H1 (cell line): ENCODE measurements at regions of chr10 and their contacts with region 1.

Region 1: DNA sequence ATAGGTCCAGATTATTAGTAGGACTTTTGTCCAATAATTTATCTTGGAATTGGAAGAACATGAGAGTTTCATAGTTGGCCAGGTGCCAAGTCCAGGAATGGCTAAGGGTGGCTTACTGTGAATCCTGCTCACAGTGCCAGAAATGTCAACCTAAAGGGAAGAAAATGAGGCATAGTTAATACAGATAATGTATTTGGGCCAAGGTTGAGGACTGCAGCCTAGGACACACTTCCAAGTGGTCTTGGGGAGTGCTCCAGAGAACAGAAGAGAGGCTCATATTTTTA is 78.2 kb downstream of the MAPK8 start:
- DNase-seq: no peak
- H3K4me3 ChIP-seq: no peak overlapping the region
- H3K27ac ChIP-seq: no peak overlapping the region
- H3K4me1 ChIP-seq: peaks cover 0 to 4% (median 0%) of the 10 kb centered on the region in 4 experiments; a peak in 2 of 7 replicates
- H3K27me3 ChIP-seq: no peaks in the 10 kb centered on the region
- CTCF ChIP-seq: no peak
- EP300 ChIP-seq: no peak
- POLR2A ChIP-seq: no peak
- RAD21 ChIP-seq: no peak

Region 2: GRCh38 chr10:48353246-48353645 is 31.4 kb before region 1 on chr10:
- CTCF ChIA-PET with region 1: no interaction called
- POLR2A ChIA-PET with region 1: no interaction called
- DNase-seq: no peak
- H3K4me3 ChIP-seq: no peak overlapping the region
- H3K27ac ChIP-seq: no peak overlapping the region
- H3K4me1 ChIP-seq: no peaks in the 10 kb centered on the region
- H3K27me3 ChIP-seq: no peaks in the 10 kb centered on the region
- CTCF ChIP-seq: no peak
- EP300 ChIP-seq: no peak
- POLR2A ChIP-seq: no peak
- RAD21 ChIP-seq: no peak

Region 3: GRCh38 chr10:48363617-48364355 is 20.9 kb before region 1 on chr10:
- CTCF ChIA-PET with region 1: interaction called, 36 read pairs
- POLR2A ChIA-PET with region 1: no interaction called
- DNase-seq: no peak
- H3K4me3 ChIP-seq: no peak overlapping the region
- H3K27ac ChIP-seq: no peak overlapping the region
- H3K4me1 ChIP-seq: peaks cover 0 to 3% (median 0%) of the 10 kb centered on the region in 4 experiments; a peak in 1 of 7 replicates
- H3K27me3 ChIP-seq: no peaks in the 10 kb centered on the region
- CTCF ChIP-seq: peak in 2 of 3 experiments; percentile 66 to 68; a peak in 3 of 4 replicates
- EP300 ChIP-seq: no peak
- POLR2A ChIP-seq: no peak
- RAD21 ChIP-seq: peak; percentile 89 to 91

Region 4: DNA sequence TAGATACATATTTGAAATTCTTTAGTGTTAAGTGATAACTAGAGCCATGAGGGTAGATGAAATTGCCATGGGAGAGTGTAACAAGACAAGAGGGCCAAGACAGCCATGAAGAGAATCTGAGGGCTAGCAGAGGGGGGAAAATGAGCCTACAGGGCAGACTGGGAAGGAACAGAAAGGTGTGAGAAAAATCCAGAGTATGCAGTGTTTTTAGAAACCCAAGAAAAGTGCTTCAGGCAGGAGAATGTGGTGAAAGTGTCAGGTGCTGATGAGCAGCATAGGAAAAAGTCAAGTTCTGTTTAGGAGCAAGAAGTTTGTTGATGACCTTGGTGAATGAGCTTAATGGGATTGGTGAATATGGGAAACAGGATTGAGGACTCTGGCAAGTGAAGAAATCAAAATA is 15.1 kb before region 1 on chr10:
- CTCF ChIA-PET with region 1: interaction called, 36 read pairs
- POLR2A ChIA-PET with region 1: interaction called, 3 read pairs
- DNase-seq: no peak
- H3K4me3 ChIP-seq: no peak overlapping the region
- H3K27ac ChIP-seq: no peak overlapping the region
- H3K4me1 ChIP-seq: no peaks in the 10 kb centered on the region
- H3K27me3 ChIP-seq: no peaks in the 10 kb centered on the region
- CTCF ChIP-seq: no peak
- EP300 ChIP-seq: no peak
- POLR2A ChIP-seq: no peak
- RAD21 ChIP-seq: no peak

Region 5: GRCh38 chr10:48400129-48400849 is 15.6 kb after region 1 on chr10:
- CTCF ChIA-PET with region 1: interaction called, 20 read pairs
- POLR2A ChIA-PET with region 1: no interaction called
- DNase-seq: no peak
- H3K4me3 ChIP-seq: no peak overlapping the region; a peak in 1 of 8 replicates
- H3K27ac ChIP-seq: no peak overlapping the region
- H3K4me1 ChIP-seq: peaks cover 4 to 13% (median 6%) of the 10 kb centered on the region in 4 experiments; a peak in 6 of 7 replicates
- H3K27me3 ChIP-seq: no peaks in the 10 kb centered on the region; a peak in 1 of 7 replicates
- CTCF ChIP-seq: no peak
- EP300 ChIP-seq: no peak
- POLR2A ChIP-seq: no peak
- RAD21 ChIP-seq: no peak